ENCODE measurements at regions of chr17 and their contacts with region 1.

Region 1: DNA sequence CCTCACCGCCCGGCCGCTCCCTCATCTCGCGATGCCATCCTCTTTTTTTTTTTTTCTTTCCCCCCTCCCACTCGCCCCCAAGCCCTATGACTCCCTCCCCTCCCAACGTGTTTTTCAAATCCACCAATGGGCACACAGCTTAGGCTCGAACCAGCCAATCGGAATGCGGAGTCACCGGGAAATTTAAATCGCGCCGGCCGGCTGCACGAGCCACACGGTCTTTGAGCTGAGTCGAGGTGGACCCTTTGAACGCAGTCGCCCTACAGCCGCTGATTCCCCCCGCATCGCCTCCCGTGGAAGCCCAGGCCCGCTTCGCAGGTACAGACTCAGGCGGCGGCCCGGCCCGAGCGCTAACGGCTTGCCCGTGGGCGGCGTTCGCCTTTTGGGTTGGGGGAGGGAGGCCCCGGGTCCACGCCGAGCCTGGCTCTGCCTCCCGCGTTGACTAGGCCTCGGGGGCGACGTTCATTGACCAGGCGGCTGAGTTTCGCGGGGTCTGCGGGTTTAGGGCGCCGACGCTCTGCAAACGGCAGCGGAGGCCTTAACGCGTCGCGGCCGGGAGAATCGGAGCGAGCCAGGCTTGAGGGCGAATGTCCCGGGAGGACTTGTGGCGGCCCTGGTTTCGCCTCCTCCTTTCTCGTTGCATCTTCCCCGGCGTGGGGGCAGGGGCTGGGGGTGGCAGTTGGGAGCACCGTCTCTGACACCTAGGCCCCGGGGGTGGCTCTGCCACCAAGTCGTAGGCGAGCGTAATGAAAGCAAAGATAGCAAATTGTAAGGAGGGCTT is at the start of gene KPNA2:
- DNase-seq: peak; percentile 93
- ATAC-seq: peak; percentile 95
- H3K4me3 ChIP-seq: peak within 1 kb of the TSS; percentile 76
- H3K27ac ChIP-seq: peak within 1 kb of the TSS; percentile 87
- H3K4me1 ChIP-seq: peaks cover 9% of the 10 kb centered on the region; the same call in 1 of the 2 replicates
- H3K27me3 ChIP-seq: no peaks in the 10 kb centered on the region
- CTCF ChIP-seq: no peak
- EP300 ChIP-seq: no peak
- POLR2A ChIP-seq: peak; percentile 97
- RAD21 ChIP-seq: no peak
- polyA plus RNA-seq, gene KPNA2: 647 to 731 TPM

Region 2: DNA sequence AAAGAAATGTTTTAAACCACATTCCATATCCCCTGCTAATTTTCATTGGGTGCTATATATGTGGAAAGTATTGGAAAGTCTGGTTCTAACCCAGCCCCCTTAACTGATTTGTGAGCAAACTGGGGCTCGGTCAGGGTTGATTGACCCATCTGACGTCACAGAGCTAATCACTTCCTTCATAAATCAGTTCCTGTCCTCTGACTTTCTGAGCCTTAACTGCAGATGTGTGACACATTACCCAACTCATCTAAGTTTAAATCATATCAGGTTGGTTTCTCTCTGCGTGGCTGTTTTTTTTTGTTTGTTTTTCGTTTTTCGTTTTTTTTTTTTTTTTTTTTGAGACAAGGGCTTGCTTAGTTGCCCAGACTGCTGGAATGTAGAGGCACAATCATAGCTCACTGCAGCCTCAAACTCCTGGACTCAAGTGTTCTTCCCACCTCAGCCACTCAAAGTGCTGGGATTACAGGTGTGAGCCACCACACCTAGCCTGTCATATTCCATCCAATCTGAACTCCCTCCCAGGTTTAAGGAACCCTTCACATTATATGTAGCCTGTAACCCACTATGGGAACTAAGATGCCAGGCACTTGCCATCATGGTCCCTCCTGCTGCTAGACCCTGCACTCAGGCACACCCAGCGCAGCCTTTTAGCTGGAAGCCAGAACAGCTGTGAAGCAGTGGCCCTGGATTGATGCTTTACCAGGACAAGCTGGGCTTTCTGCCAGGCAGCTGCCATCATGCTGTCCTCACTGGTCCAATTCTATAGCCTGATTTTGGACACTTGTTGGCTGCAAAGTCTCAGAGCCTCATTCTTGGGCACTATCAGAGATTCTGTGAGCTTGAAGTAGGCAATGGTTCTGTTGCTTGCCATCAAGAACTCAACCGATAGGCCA is 217.4 kb before region 1 on chr17:
- CTCF ChIA-PET with region 1: no interaction called
- POLR2A ChIA-PET with region 1: no interaction called
- RAD21 ChIA-PET with region 1: no interaction called
- SMC1A ChIA-PET with region 1: no interaction called
- in situ Hi-C with region 1: no loop called
- intact Hi-C with region 1: no loop called
- DNase-seq: peak; percentile 88
- ATAC-seq: peak; percentile 76
- H3K4me3 ChIP-seq: no peak overlapping the region
- H3K27ac ChIP-seq: peak overlapping the region; percentile 45; the same call in 1 of the 2 replicates
- H3K4me1 ChIP-seq: peaks cover 44% of the 10 kb centered on the region
- H3K27me3 ChIP-seq: no peaks in the 10 kb centered on the region
- CTCF ChIP-seq: no peak
- EP300 ChIP-seq: peak; percentile 49 to 72; a peak in 2 of 4 replicates
- POLR2A ChIP-seq: no peak
- RAD21 ChIP-seq: no peak

Region 3: GRCh38 chr17:68019675-68020408 is 15.9 kb before region 1 on chr17:
- CTCF ChIA-PET with region 1: interaction called, 5 read pairs
- POLR2A ChIA-PET with region 1: interaction called, 12 read pairs
- RAD21 ChIA-PET with region 1: interaction called, 10 read pairs
- SMC1A ChIA-PET with region 1: interaction called, 6 read pairs
- in situ Hi-C with region 1: no loop called
- intact Hi-C with region 1: loop called (anchors 2 kb)
- DNase-seq: peak; percentile 97
- ATAC-seq: peak; percentile 98
- H3K4me3 ChIP-seq: peak overlapping the region; percentile 77
- H3K27ac ChIP-seq: peak overlapping the region; percentile 70
- H3K4me1 ChIP-seq: no peaks in the 10 kb centered on the region
- H3K27me3 ChIP-seq: peaks cover 0 to 2% of the 10 kb centered on the region in 2 experiments; a peak in 1 of 4 replicates
- CTCF ChIP-seq: peak; percentile 19 to 53 (median 41); a peak in 5 of 6 replicates
- EP300 ChIP-seq: no peak; a peak in 1 of 4 replicates
- POLR2A ChIP-seq: peak; percentile 87
- RAD21 ChIP-seq: no peak

Region 4: DNA sequence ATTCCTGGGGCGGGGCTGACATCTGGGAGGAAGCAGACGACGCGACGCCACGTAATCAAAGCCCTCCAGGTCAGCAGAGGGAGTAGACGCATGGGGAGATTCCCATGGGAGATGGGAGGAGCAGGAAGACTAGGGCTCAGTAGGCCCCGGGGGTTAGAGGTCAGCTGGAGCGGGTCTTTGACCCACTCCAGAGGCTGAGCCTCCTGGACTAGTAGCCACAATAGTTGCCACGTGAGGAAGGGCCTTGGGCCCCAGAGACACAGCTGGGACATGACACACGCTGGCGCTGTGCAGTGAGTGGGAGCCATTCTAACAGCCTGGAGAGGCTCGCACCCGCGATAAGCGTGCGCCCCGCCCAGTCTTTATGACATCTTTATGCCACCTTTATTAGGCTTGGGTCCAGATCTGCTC is 116.5 kb after region 1 on chr17:
- CTCF ChIA-PET with region 1: no interaction called
- POLR2A ChIA-PET with region 1: no interaction called
- RAD21 ChIA-PET with region 1: no interaction called
- SMC1A ChIA-PET with region 1: no interaction called
- in situ Hi-C with region 1: no loop called
- intact Hi-C with region 1: no loop called
- DNase-seq: no peak
- ATAC-seq: no peak
- H3K4me3 ChIP-seq: no peak overlapping the region
- H3K27ac ChIP-seq: no peak overlapping the region
- H3K4me1 ChIP-seq: no peaks in the 10 kb centered on the region
- H3K27me3 ChIP-seq: no peaks in the 10 kb centered on the region; a peak in 3 of 4 replicates
- CTCF ChIP-seq: no peak
- EP300 ChIP-seq: no peak
- POLR2A ChIP-seq: no peak
- RAD21 ChIP-seq: no peak